Calu3 (cell line): ENCODE measurements at regions of chr11 and their contacts with region 1.

Region 1: GRCh38 chr11:113305440-113306336 is 8.7 kb upstream of the TTC12 start:
- DNase-seq: peak; percentile 76
- H3K4me3 Mint-ChIP-seq: no peak overlapping the region
- H3K27ac Mint-ChIP-seq: no peak overlapping the region
- H3K4me1 Mint-ChIP-seq: no peaks in the 10 kb centered on the region
- H3K27me3 Mint-ChIP-seq: peaks cover 18% of the 10 kb centered on the region
- CTCF ChIP-seq: peak; percentile 72

Region 2: DNA sequence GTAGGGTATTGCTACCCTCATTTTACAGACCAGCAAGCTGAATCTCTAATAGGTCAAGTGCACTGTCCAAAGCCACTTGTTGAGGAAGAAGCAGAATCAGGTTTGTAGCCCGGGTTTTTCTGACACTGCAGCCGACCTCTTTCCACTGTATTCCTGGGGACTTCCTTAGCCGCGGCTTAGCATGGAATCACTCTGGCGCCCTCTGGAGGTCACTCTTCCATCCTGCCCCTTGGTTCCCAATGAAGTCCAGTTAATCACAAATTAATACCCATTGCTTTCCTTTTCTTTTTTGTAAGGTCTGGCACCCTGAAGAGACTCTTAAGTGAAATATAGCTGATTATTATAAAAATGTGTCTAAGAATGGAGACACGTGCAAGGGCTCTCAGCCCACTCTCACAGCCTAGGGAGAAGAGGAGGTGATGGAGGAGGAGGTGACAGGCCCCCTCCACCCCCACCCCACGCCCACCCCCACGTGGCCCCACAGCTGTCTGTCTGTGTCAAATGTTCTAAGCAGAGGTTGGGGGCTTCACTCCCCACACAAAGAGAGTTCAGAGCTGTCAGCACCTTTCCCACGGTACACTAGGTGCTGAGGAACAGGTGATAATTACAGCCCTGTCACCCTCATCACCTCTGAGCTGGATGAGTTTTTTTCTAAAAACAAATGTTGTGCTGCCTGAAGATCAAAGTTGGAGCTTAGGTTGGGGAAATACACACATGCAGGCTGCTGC is 227.2 kb after region 1 on chr11:
- CTCF ChIA-PET with region 1: no interaction called
- intact Hi-C with region 1: loop called (anchors 1 kb)
- DNase-seq: peak; percentile 73
- H3K4me3 Mint-ChIP-seq: no peak overlapping the region
- H3K27ac Mint-ChIP-seq: no peak overlapping the region
- H3K4me1 Mint-ChIP-seq: no peaks in the 10 kb centered on the region
- H3K27me3 Mint-ChIP-seq: no peaks in the 10 kb centered on the region
- CTCF ChIP-seq: peak; percentile 40

Region 3: DNA sequence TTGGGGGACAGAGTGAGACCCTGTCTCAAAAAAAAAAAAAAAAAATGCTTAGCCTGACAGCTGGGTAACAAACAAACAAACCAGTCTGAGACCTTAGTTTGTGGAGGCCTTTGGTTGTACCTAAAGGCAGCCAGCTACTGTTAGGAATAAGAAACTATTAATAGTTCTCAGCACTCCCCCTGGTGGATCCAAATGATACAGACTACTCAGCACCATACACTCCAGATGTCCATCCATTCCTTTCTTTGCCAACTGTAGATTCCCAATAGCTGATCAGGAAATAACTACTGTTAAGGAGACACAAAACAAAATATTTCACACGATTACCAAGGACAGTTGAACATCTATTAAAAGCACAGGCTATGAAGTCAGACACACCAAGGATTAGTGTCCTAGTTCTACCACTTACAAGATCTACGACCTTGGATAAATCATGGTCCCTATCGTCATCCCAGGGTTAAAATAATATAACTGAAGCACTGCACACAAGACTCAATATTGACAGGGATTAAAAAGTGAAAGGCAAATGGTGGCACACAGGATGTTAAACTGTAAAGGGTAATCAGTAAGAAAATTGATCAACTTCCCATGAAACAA is 491.1 kb after region 1 on chr11:
- CTCF ChIA-PET with region 1: no interaction called
- intact Hi-C with region 1: loop called (anchors 2 kb)
- DNase-seq: peak; percentile 28
- H3K4me3 Mint-ChIP-seq: no peak overlapping the region
- H3K27ac Mint-ChIP-seq: no peak overlapping the region
- H3K4me1 Mint-ChIP-seq: no peaks in the 10 kb centered on the region
- H3K27me3 Mint-ChIP-seq: no peaks in the 10 kb centered on the region
- CTCF ChIP-seq: peak; percentile 27